ENCODE measurements at regions of chr1 and their contacts with region 1.

Region 1: GRCh38 chr1:23634842-23635651 is 56.6 kb upstream of the RPL11 start:
- DNase-seq: peak; percentile 76
- ATAC-seq: peak; percentile 83
- H3K4me3 Mint-ChIP-seq: peak overlapping the region; percentile 63
- H3K27ac Mint-ChIP-seq: peak overlapping the region; percentile 81
- H3K4me1 Mint-ChIP-seq: peaks cover 29% of the 10 kb centered on the region
- H3K27me3 Mint-ChIP-seq: peaks cover 4% of the 10 kb centered on the region

Region 2: GRCh38 chr1:23530747-23531561 is 104.1 kb before region 1 on chr1 and contains the start of gene E2F2:
- CTCF ChIA-PET with region 1: interaction called, 42 read pairs
- POLR2A ChIA-PET with region 1: interaction called, 3 read pairs
- DNase-seq: peak; percentile 90
- ATAC-seq: peak; percentile 76
- H3K4me3 Mint-ChIP-seq: peak within 1 kb of the TSS; percentile 96
- H3K27ac Mint-ChIP-seq: peak within 1 kb of the TSS; percentile 94
- H3K4me1 Mint-ChIP-seq: peaks cover 61% of the 10 kb centered on the region
- H3K27me3 Mint-ChIP-seq: no peaks in the 10 kb centered on the region
- total RNA-seq, gene E2F2: 75.0 to 80.3 TPM

Region 3: DNA sequence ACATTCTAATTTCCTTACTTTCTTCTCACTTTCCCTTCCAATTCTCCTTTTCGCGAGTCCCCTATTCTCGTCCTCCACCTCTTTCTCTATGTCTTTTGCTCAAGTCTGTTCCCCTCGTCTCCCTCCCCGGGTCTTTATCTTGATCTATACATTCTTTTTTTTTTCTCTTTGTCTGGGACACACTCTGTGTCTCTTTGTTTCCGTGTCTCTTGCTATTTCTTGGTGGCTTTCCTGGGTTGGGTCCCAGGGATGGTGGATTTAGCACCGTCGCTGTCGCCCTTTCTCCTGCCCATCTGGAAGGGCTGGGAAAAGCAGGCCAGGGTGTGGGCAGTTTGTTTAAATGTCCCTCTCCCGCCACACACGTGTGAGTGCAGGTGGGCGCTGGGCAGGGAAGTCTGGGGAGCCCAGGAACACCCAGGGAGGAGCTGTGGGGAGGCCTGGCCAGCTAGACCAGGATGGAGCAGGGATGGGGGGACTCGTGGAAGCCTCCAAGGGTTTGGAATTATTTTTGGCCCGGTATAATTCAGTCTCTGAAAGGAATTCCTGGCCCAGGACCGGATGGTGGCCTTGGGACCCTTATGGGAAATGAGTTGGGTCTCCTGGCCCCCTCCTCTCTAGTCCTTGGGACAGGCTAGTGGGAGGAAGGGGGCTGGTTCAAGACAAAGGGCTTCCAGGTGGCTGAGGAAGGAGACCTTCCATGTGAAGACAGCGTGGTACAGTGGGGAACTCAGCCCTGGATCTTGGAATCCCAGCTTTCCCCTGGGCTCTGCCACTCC is 66.3 kb before region 1 on chr1:
- CTCF ChIA-PET with region 1: interaction called, 144 read pairs
- POLR2A ChIA-PET with region 1: no interaction called
- DNase-seq: no peak
- ATAC-seq: no peak
- H3K4me3 Mint-ChIP-seq: peak overlapping the region; percentile 68
- H3K27ac Mint-ChIP-seq: peak overlapping the region; percentile 17
- H3K4me1 Mint-ChIP-seq: peaks cover 13% of the 10 kb centered on the region
- H3K27me3 Mint-ChIP-seq: peaks cover 44% of the 10 kb centered on the region

Region 4: DNA sequence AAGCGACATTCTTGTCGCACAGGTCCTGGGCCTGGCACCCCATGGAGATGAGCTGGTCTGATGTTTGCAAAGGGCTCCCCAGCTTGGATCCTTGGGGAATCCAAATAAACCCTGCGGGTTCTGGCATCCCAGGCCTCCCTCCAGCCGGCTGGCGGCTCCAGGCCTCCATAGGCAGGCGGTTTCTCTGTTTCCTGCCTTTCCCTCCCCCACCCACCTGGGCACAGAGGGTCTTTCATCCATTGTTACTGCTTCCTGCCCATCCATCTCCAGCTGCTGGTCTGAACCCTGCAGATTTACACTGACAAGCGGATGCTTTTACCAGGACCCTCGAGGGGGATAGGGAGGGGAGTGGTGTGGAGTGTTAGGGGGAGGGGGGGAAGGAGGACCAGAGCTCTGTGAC is 36.6 kb before region 1 on chr1:
- CTCF ChIA-PET with region 1: interaction called, 133 read pairs
- POLR2A ChIA-PET with region 1: interaction called, 5 read pairs
- DNase-seq: no peak
- ATAC-seq: no peak
- H3K4me3 Mint-ChIP-seq: no peak overlapping the region
- H3K27ac Mint-ChIP-seq: peak overlapping the region; percentile 51
- H3K4me1 Mint-ChIP-seq: peaks cover 93% of the 10 kb centered on the region
- H3K27me3 Mint-ChIP-seq: no peaks in the 10 kb centered on the region

Region 5: GRCh38 chr1:23657659-23658275 is 22.7 kb after region 1 on chr1:
- CTCF ChIA-PET with region 1: interaction called, 18 read pairs
- POLR2A ChIA-PET with region 1: no interaction called
- DNase-seq: peak; percentile 60
- ATAC-seq: peak; percentile 88
- H3K4me3 Mint-ChIP-seq: no peak overlapping the region
- H3K27ac Mint-ChIP-seq: no peak overlapping the region
- H3K4me1 Mint-ChIP-seq: no peaks in the 10 kb centered on the region
- H3K27me3 Mint-ChIP-seq: peaks cover 5% of the 10 kb centered on the region

Measured in activated CD8-positive, alpha-beta T cell treated with anti-CD3 and anti-CD28 coated beads, Interleukin-2, amount 10 ng/mL, durations not matched to agents 7 days and 5 days (primary cell).